ENCODE measurements at regions of chr1 and their contacts with region 1.

Region 1: DNA sequence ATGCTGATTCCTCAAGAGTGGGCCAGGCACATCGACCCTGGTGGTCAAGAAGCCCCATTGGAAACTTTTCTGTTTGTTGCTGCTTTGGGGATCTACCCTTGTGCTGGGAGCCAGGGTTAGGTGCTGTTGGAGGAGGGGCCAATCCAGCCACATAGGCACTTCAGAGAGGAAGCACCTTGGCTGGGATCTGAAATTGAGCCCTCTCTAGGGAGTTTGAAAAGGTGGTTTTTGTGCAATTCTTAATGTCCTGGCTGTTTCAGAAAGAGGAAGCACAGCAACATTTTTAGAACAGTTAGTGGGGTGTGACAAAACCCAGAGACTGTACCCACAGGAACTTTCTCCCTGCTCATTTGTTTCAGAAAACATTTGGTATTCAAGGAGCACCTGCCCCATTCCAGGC is 17.2 kb upstream of the BEND5 start:
- DNase-seq: peak; percentile 42
- ATAC-seq: peak; percentile 95
- H3K4me3 Mint-ChIP-seq: peak overlapping the region; percentile 71
- H3K27ac Mint-ChIP-seq: peak overlapping the region; percentile 90
- H3K4me1 Mint-ChIP-seq: peaks cover 89% of the 10 kb centered on the region
- H3K27me3 Mint-ChIP-seq: no peaks in the 10 kb centered on the region
- CTCF ChIP-seq: no peak

Region 2: DNA sequence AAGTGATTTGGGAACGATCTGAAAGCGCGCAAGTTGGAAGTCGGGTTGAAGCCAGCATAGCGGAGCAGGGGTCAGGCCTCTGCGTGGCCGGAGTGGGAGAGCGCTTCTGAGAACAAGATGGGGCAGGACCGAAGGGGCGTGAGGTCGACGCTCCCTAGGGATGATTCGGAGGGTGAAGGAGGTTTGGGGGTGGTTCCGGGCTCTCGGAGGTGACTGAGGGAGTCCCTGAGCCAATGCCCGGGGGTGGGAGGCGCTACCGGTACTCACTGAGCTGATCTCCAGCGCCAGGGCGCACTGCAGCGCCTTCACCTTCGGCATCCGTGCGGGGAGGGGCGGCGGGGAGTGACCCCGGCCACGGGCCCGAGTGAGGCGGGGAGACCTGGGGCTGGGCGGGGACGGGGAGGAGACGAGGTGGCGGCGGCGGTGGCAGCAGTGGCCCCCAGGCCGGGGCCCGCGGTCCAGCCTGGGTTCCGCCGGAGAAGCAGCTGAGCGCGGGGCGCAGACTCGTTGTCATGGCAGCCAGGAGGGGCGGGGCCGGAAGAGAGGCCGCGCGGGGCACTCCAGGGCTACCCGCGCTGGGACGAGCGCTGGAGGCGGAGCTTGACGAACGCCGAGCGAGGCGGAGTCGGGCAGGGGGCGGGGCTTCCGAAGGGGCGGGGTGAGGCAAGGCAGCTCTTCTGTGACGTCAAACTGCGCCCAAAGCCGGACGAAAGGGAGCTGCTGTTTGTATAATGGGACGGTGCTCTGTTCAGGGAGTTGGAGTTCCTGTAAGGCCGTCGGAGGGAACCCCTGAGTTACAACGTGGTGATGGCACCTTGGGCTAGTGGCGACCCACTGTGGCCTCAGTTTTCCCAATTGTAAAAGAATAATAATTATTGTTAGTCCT is 321.9 kb before region 1 on chr1 and contains the start of gene SPATA6:
- CTCF ChIA-PET with region 1: no interaction called
- POLR2A ChIA-PET with region 1: no interaction called
- intact Hi-C with region 1: loop called (anchors 5 kb)
- DNase-seq: peak; percentile 87
- ATAC-seq: peak; percentile 94
- H3K4me3 Mint-ChIP-seq: peak within 1 kb of the TSS; percentile 88
- H3K27ac Mint-ChIP-seq: peak within 1 kb of the TSS; percentile 71
- H3K4me1 Mint-ChIP-seq: peaks cover 32% of the 10 kb centered on the region
- H3K27me3 Mint-ChIP-seq: peaks cover 15% of the 10 kb centered on the region
- CTCF ChIP-seq: no peak
- total RNA-seq, gene SPATA6: 4.2 and 4.8 TPM in 2 replicates

Region 3: DNA sequence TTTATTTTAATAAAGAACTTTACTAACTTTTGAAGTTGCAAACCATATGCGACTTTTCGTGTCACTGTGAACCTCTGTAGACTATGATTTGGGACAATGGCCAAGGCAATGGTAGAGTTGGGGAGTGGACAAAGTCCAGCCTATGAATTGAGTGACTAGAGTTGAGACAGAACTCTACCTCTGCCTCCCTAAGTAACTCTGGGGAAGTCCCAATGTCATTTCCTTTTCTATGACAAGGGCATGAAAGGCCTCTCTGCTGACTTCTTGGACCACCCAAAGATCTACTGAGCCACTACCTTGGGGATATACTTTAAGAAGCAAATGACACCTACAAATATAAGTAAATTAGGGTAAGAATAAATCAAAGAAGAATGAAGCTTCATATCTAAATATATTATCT is 36.5 kb before region 1 on chr1:
- CTCF ChIA-PET with region 1: interaction called, 4 read pairs
- POLR2A ChIA-PET with region 1: interaction called, 3 read pairs
- intact Hi-C with region 1: loop called (anchors 5 kb)
- DNase-seq: no peak
- ATAC-seq: peak; percentile 65
- H3K4me3 Mint-ChIP-seq: no peak overlapping the region
- H3K27ac Mint-ChIP-seq: peak overlapping the region; percentile 77
- H3K4me1 Mint-ChIP-seq: peaks cover 77% of the 10 kb centered on the region
- H3K27me3 Mint-ChIP-seq: no peaks in the 10 kb centered on the region
- CTCF ChIP-seq: no peak

Region 4: GRCh38 chr1:48776393-48777218 is 17.3 kb before region 1 on chr1 and contains the start of gene BEND5:
- CTCF ChIA-PET with region 1: interaction called, 3 read pairs
- POLR2A ChIA-PET with region 1: interaction called, 13 read pairs
- intact Hi-C with region 1: loop called (anchors 1 kb)
- DNase-seq: peak; percentile 65
- ATAC-seq: peak; percentile 82
- H3K4me3 Mint-ChIP-seq: peak within 1 kb of the TSS; percentile 94
- H3K27ac Mint-ChIP-seq: peak within 1 kb of the TSS; percentile 92
- H3K4me1 Mint-ChIP-seq: peaks cover 67% of the 10 kb centered on the region
- H3K27me3 Mint-ChIP-seq: no peaks in the 10 kb centered on the region
- CTCF ChIP-seq: no peak
- total RNA-seq, gene BEND5: 14.5 and 17.9 TPM in 2 replicates

Region 5: GRCh38 chr1:48807554-48808260 is 13.8 kb after region 1 on chr1:
- CTCF ChIA-PET with region 1: no interaction called
- POLR2A ChIA-PET with region 1: interaction called, 4 read pairs
- intact Hi-C with region 1: loop called (anchors 1 kb)
- DNase-seq: no peak
- ATAC-seq: no peak
- H3K4me3 Mint-ChIP-seq: no peak overlapping the region
- H3K27ac Mint-ChIP-seq: no peak overlapping the region
- H3K4me1 Mint-ChIP-seq: peaks cover 27% of the 10 kb centered on the region
- H3K27me3 Mint-ChIP-seq: no peaks in the 10 kb centered on the region
- CTCF ChIP-seq: no peak

Measured in activated B cell treated with CpG ODN at 0.5 μM for 24 hours (primary cell).